KBM-7 (cell line): ENCODE measurements at regions of chr2 and their contacts with region 1.

Region 1: GRCh38 chr2:66434679-66435548 is at the start of gene MEIS1:
- DNase-seq: peak; percentile 97

Region 2: DNA sequence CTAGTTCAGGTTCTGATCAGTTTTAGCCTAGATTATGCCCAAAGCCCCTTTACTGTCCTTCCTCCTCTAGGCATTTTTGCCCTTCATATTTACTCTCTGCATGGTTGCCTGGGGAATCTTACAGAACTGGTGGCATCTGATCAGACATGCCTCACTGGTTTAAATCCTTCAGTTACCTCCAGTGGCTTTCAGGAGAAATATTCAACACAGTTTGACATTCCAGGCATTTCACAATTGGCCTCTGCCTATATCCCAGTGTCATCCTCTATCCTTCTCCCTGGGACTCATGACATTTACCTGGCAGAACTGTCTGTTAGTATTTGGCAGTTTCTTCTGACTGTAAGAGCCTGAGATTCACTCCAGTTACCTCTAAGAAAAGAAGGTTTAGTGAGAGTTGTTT is 152.9 kb before region 1 on chr2:
- in situ Hi-C with region 1: no loop called
- DNase-seq: no peak

Region 3: GRCh38 chr2:66587216-66587615 is 152.3 kb after region 1 on chr2:
- in situ Hi-C with region 1: loop called (anchors 10 kb)
- DNase-seq: no peak

Region 4: DNA sequence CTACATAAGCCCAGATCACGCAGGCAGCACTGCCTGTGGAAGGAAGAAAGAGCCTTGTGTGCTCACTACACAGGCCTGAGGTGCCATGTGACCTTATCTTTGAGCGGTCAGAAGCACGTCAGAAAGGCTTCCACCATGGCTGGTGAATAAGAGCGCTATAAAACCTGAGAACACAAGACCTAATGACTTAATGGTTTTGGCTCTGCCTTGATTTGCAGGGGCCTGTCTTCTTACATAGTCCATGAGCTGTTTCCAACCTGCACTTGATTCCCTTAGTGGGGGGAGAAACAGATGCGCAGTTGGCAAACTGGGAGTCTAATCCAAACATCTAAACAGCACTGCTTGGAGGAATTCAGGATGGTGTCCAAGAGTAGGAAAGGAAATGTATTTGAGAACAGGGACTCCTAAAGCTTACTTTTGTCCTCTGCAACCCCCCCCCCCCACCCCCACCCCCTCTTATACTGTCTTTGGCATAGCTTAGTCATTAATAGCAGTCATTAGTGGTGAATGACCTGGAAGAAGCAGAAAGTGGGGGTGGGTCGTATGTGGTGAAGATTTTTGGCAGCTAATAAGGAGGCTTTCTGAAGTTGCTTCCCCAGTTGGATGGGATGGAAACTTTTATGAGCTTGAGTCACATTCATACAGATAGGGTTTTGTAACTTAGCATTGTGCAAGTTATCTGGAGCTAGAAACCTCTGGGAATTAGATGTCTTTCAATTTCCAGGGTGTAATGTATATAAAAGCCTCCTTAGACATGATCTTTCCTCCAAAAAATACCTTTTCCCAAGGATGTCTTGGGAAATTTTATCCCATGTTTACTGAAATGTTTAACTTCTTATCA is 454.1 kb after region 1 on chr2:
- in situ Hi-C with region 1: no loop called
- DNase-seq: no peak